Activated CD4-positive, alpha-beta memory T cell treated with anti-CD3 and anti-CD28 coated beads for 36 hours (primary cell): ENCODE measurements at regions of chr3 and their contacts with region 1.

Region 1: DNA sequence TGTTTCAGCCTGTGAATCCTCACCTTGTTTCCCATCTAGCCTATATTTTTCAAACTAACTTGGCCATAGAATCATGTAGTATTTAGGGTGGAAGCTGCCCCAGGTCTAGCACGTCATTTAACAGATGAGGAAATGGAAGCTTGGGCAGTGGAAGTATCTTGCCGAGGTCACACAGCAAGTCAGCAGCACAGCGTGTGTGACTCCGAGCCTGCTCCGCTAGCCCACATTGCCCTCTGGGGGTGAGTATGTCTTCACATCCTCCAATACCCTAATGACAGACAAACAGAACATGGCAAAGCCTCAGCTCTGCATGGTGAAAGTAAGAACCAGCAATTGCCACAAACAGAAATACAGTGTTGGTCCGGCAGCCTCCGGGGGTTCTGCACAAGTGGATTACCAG is 2.2 kb upstream of the CCR5 start:
- DNase-seq: peak; percentile 80
- H3K4me3 Mint-ChIP-seq: no peak overlapping the region
- H3K27ac Mint-ChIP-seq: no peak overlapping the region
- H3K4me1 Mint-ChIP-seq: peaks cover 58% of the 10 kb centered on the region
- H3K27me3 Mint-ChIP-seq: peaks cover 24% of the 10 kb centered on the region

Region 2: DNA sequence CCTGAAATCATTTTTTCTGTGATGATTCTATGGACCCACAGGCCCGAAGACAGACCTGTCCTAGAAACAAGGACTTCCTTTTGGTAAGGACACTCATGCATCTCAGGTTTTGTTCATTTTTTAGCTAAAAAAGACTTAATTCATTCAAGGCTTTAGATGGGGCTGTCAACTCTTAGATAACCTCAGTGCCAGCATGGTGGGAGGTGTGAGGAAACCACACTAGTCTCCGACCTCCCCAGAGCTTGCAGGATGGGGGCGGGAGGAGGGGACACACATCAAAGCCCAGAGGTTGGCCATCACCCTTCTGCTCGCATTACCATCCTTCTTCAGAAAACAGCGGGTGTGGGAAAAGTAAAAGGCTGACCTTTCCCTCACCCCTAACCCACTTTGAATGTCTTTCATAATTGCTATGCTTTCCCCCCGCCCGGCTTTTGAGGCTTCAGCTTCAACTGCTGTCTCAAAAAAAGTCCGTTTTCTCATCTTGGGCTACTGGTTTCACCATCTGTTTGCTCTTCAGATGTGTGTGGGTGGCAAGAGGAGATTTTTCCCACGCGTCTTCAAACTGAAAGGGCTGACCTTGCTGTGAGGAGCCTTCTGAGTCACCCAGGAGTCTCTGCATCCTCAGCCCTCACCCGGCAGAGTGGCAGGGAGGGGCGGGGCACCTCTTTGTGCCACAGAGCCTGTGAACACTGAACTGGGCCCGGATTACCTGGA is 452.9 kb before region 1 on chr3:
- CTCF ChIA-PET with region 1: no interaction called
- POLR2A ChIA-PET with region 1: no interaction called
- intact Hi-C with region 1: loop called (anchors 5 kb)
- DNase-seq: peak; percentile 91
- H3K4me3 Mint-ChIP-seq: peak overlapping the region; percentile 46
- H3K27ac Mint-ChIP-seq: peak overlapping the region; percentile 61
- H3K4me1 Mint-ChIP-seq: peaks cover 44% of the 10 kb centered on the region
- H3K27me3 Mint-ChIP-seq: peaks cover 19% of the 10 kb centered on the region

Region 3: GRCh38 chr3:46089237-46090011 is 279.1 kb before region 1 on chr3:
- CTCF ChIA-PET with region 1: interaction called, 26 read pairs
- POLR2A ChIA-PET with region 1: interaction called, 4 read pairs
- intact Hi-C with region 1: no loop called
- DNase-seq: peak; percentile 65
- H3K4me3 Mint-ChIP-seq: no peak overlapping the region
- H3K27ac Mint-ChIP-seq: no peak overlapping the region
- H3K4me1 Mint-ChIP-seq: peaks cover 19% of the 10 kb centered on the region
- H3K27me3 Mint-ChIP-seq: peaks cover 33% of the 10 kb centered on the region

Region 4: GRCh38 chr3:46214751-46215352 is 153.7 kb before region 1 on chr3:
- CTCF ChIA-PET with region 1: interaction called, 33 read pairs
- POLR2A ChIA-PET with region 1: no interaction called
- intact Hi-C with region 1: no loop called
- DNase-seq: peak; percentile 41
- H3K4me3 Mint-ChIP-seq: no peak overlapping the region
- H3K27ac Mint-ChIP-seq: no peak overlapping the region
- H3K4me1 Mint-ChIP-seq: no peaks in the 10 kb centered on the region
- H3K27me3 Mint-ChIP-seq: no peaks in the 10 kb centered on the region

Region 5: GRCh38 chr3:46284981-46285683 is 83.4 kb before region 1 on chr3:
- CTCF ChIA-PET with region 1: interaction called, 88 read pairs
- POLR2A ChIA-PET with region 1: interaction called, 49 read pairs
- intact Hi-C with region 1: loop called (anchors 2 kb)
- DNase-seq: peak; percentile 79
- H3K4me3 Mint-ChIP-seq: no peak overlapping the region
- H3K27ac Mint-ChIP-seq: peak overlapping the region; percentile 38
- H3K4me1 Mint-ChIP-seq: peaks cover 79% of the 10 kb centered on the region
- H3K27me3 Mint-ChIP-seq: peaks cover 11% of the 10 kb centered on the region

Region 6: DNA sequence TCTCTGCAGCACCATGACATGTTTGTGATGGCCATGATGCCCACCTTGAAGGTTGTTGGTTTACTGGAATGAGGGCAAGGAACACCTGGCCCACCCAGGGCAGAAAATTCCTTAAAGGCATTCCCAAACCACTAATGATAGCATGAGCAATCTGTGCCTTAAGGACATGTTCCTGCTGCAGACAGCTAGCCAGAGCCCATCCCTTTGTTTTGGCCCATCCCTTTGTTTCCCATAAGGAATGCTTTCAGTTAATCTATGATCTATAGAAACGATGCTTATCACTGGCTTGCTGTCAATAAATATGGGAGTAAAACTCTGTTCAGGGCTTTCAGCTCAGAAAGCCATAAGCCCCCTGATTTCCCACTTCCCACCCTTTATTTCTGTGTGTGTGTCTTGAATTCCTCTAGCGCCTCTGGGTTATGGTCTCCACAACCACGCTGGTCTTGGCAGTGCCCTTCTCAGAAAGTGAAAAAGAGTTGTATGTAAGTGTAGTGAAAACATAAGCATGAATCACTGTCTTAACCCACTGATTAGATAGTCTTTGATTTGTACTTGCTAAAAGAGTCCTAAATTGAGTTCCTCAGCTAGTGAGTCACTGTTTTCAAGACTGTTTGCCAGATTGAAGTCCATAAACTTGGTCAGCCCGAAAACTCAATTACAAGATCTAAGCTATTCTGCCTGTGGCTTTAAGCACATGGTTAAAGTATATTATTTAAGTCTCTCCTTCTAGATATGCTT is 33.7 kb before region 1 on chr3:
- CTCF ChIA-PET with region 1: interaction called, 7 read pairs
- POLR2A ChIA-PET with region 1: interaction called, 5 read pairs
- intact Hi-C with region 1: loop called (anchors 2 kb)
- DNase-seq: peak; percentile 30
- H3K4me3 Mint-ChIP-seq: no peak overlapping the region
- H3K27ac Mint-ChIP-seq: no peak overlapping the region
- H3K4me1 Mint-ChIP-seq: peaks cover 8% of the 10 kb centered on the region
- H3K27me3 Mint-ChIP-seq: peaks cover 16% of the 10 kb centered on the region